ENCODE measurements at regions of chr12 and their contacts with region 1.

Region 1: DNA sequence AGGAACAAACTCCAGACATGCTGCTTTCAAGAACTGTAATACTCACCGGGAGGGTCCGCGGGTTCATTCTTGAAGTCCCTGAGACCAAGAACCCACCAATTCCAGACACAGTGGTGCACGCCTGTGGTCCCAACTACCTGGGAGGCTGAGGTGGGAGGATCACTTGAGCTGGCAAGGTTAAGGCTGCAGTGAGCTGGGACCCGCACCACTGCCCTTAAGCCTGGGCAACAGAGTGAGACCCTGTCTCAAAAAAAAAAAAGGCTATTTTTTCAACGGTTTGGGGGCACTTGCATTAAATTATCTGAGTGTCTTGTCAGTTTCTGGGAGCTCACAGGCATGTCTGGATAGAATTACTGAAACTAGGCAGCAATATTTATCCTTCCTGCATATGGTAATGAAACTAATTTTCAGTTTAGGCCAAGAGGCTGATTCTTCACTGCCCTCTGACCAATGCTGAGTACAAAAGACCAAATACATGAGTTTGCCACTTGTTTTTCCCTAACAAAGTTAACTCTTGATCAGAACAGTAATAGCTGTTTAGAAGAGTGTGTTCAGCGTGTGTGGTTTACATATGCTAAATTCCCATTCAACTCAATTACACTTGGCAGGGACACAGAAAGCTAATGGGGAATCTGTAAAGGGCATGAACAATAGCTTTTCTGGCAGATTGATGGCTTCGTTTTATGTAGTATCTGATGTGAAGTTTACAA is 65.8 kb upstream of the RASSF3 start:
- DNase-seq: no peak
- H3K4me3 Mint-ChIP-seq: no peak overlapping the region
- H3K27ac Mint-ChIP-seq: no peak overlapping the region
- H3K4me1 Mint-ChIP-seq: peaks cover 2% of the 10 kb centered on the region
- H3K27me3 Mint-ChIP-seq: peaks cover 11% of the 10 kb centered on the region

Region 2: GRCh38 chr12:64323476-64324225 is 220.9 kb before region 1 on chr12:
- CTCF ChIA-PET with region 1: no interaction called
- POLR2A ChIA-PET with region 1: no interaction called
- DNase-seq: no peak
- H3K4me3 Mint-ChIP-seq: no peak overlapping the region
- H3K27ac Mint-ChIP-seq: no peak overlapping the region
- H3K4me1 Mint-ChIP-seq: no peaks in the 10 kb centered on the region
- H3K27me3 Mint-ChIP-seq: no peaks in the 10 kb centered on the region

Region 3: GRCh38 chr12:64528616-64529015 is 15.9 kb before region 1 on chr12:
- CTCF ChIA-PET with region 1: no interaction called
- POLR2A ChIA-PET with region 1: no interaction called
- DNase-seq: no peak
- H3K4me3 Mint-ChIP-seq: no peak overlapping the region
- H3K27ac Mint-ChIP-seq: no peak overlapping the region
- H3K4me1 Mint-ChIP-seq: no peaks in the 10 kb centered on the region
- H3K27me3 Mint-ChIP-seq: peaks cover 3% of the 10 kb centered on the region

Region 4: DNA sequence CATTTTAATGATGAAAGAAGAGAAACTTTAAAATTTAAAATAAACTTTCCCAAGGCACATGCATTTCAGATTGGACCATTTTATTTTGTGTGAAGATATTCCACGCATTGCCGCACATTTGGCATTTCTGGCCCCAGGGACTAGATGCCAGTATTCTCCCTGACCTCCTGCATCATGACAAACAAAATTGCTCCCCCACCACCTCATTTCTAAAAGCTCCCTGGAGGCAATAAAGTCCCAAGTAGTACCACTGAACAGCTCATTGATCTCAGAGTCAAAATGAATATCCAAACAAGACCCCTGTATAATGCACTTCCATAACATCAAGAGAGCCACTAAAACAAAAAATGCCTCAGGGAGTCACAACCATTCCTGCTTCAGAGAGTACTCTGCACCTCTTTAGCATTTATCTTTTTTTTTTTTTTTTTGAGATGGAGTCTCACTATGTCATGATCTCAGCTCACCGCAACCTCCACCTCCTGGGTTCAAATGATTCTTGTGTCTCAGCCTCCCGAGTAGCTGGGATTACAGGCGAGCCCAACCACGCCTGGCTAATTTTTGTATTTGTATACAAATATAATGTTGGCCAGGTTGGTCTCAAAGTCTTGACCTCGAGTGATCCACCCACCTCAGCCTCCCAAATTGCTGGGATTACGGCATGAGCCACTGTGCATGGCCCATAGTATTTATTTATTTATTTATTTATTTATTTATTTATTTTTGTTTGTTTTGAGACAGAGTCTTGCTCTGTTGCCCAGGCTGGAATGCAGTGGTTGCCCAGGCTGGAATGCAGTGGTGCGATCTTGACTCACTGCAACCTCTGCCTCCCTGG is 17.0 kb after region 1 on chr12:
- CTCF ChIA-PET with region 1: interaction called, 4 read pairs
- POLR2A ChIA-PET with region 1: interaction called, 10 read pairs
- DNase-seq: no peak
- H3K4me3 Mint-ChIP-seq: no peak overlapping the region
- H3K27ac Mint-ChIP-seq: no peak overlapping the region
- H3K4me1 Mint-ChIP-seq: peaks cover 3% of the 10 kb centered on the region
- H3K27me3 Mint-ChIP-seq: no peaks in the 10 kb centered on the region